Ascending aorta (tissue), 2 donors: ENCODE measurements at regions of chr1 and their contacts with region 1.

Region 1: GRCh38 chr1:40338745-40339424 is 21.8 kb upstream of the COL9A2 start:
- DNase-seq: peak; percentile 46 to 93
- H3K4me3 ChIP-seq: no peak overlapping the region
- H3K27ac ChIP-seq: no peak overlapping the region
- H3K4me1 ChIP-seq: no peaks in the 10 kb centered on the region
- H3K27me3 ChIP-seq: no peaks in the 10 kb centered on the region
- CTCF ChIP-seq: peak; percentile 95 to 100 (median 97)

Region 2: DNA sequence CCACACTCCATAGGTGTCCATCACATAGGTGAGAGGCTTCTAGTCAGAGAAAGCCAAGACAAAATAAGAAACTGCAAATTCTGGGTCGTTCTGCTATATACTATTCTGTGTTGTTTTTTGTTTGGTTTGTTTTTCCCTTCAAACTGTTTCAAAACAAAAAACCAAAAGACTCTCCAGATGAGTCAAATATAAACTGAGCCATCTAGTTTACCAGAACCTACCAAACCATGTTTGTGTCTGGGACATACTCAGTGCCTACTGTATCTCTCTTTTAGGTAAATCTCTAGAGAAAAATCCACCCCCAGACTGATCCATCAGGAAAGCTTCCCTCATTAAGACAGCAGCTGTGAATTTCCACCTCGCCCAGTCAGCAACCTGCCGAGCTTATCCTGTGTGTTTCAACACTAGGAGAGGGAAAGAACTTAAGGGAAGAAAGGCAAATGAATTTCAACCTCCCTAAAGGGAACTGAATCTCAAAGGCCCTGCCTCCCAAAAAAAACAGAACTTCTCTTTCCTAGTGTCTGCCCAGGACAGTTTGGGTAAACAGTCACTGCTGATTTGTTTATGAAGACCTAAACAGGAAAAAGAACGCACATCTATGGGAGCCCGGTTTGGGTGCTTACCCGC is 259.0 kb before region 1 on chr1:
- intact Hi-C with region 1: loop called (anchors 1 kb)
- DNase-seq: no peak
- H3K4me3 ChIP-seq: no peak overlapping the region
- H3K27ac ChIP-seq: no peak overlapping the region
- H3K4me1 ChIP-seq: no peaks in the 10 kb centered on the region
- H3K27me3 ChIP-seq: no peaks in the 10 kb centered on the region
- CTCF ChIP-seq: no peak

Region 3: GRCh38 chr1:40143891-40144575 is 194.9 kb before region 1 on chr1:
- intact Hi-C with region 1: loop called (anchors 1 kb)
- DNase-seq: peak in 1 of 2 donors; percentile 79
- H3K4me3 ChIP-seq: no peak overlapping the region
- H3K27ac ChIP-seq: no peak overlapping the region
- H3K4me1 ChIP-seq: no peaks in the 10 kb centered on the region
- H3K27me3 ChIP-seq: no peaks in the 10 kb centered on the region
- CTCF ChIP-seq: peak; percentile 65 to 85 (median 73)

Region 4: GRCh38 chr1:40153073-40153770 is 185.7 kb before region 1 on chr1:
- intact Hi-C with region 1: loop called (anchors 1 kb)
- DNase-seq: no peak
- H3K4me3 ChIP-seq: no peak overlapping the region
- H3K27ac ChIP-seq: no peak overlapping the region
- H3K4me1 ChIP-seq: peaks cover 0 to 3% of the 10 kb centered on the region in 2 donors
- H3K27me3 ChIP-seq: no peaks in the 10 kb centered on the region
- CTCF ChIP-seq: peak; percentile 51 to 76 (median 65)

Region 5: GRCh38 chr1:40404670-40405462 is 66.0 kb after region 1 on chr1:
- intact Hi-C with region 1: loop called (anchors 5 kb)
- DNase-seq: no peak
- H3K4me3 ChIP-seq: no peak overlapping the region
- H3K27ac ChIP-seq: no peak overlapping the region
- H3K4me1 ChIP-seq: no peaks in the 10 kb centered on the region
- H3K27me3 ChIP-seq: no peaks in the 10 kb centered on the region
- CTCF ChIP-seq: peak; percentile 68 to 79 (median 79)